ENCODE measurements at regions of chr16 and their contacts with region 1.

Region 1: DNA sequence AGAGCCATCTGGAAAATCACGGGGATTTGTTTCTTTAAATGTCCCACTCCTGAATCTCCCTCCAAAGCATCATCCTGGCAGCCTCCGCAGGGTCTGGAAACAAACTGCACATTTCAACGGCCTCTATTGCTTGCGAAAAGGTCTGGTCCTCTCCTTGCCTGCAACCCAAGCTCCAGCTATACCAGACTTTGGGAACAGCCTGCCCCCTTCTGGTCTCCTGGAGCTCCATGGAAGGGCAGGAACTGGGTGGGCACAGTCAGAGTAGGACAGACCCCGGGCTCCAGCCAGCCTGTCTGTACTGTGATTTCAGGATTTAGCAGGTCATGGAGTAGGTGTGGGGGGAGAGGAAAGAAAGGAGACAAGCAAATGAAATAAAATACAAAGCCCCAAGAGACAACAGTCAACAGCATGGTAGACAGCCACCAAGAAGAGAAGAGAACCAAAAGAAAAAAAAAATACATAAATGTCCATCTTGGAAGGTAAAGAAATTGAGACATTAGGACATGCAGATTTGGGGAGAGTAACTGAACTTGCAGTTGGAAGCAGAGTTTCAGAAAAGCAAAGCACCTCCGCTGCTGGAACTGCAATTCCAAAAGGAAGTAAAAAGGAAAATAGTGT is 2.7 kb downstream of the XYLT1 start:
- DNase-seq: peak; percentile 33
- ATAC-seq: peak; percentile 78
- H3K4me3 ChIP-seq: no peak overlapping the region
- H3K27ac ChIP-seq: no peak overlapping the region
- H3K4me1 ChIP-seq: no peaks in the 10 kb centered on the region
- H3K27me3 ChIP-seq: peaks cover 21 to 69% of the 10 kb centered on the region in 2 experiments
- CTCF ChIP-seq: peak; percentile 73
- EP300 ChIP-seq: no peak
- POLR2A ChIP-seq: no peak
- RAD21 ChIP-seq: no peak

Region 2: DNA sequence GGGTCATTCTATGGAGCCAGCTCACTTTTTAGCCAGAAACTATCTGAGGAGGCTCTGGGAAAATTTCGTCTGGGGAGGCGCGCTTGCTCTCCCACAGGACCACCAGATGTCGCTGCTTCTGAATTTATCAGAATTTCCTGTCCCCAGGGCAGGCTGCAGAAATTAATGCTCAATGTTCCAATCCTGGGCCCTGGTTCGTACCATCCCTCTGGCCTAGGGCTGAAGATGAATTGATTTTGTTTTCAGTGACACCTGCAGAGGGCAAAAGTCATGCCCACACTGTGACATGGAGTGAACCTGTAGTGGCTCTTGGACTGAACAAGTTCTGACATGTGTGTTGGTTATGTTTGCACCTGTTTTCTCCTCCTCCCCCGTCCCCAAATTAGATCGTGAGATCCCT is 606.5 kb before region 1 on chr16:
- CTCF ChIA-PET with region 1: interaction called, 3 read pairs
- POLR2A ChIA-PET with region 1: no interaction called
- in situ Hi-C with region 1: loop called (anchors 25 kb)
- intact Hi-C with region 1: no loop called
- DNase-seq: peak; percentile 49
- ATAC-seq: peak; percentile 84
- H3K4me3 ChIP-seq: no peak overlapping the region
- H3K27ac ChIP-seq: no peak overlapping the region
- H3K4me1 ChIP-seq: no peaks in the 10 kb centered on the region
- H3K27me3 ChIP-seq: no peaks in the 10 kb centered on the region; a peak in 1 of 5 replicates
- CTCF ChIP-seq: peak; percentile 86
- EP300 ChIP-seq: no peak
- POLR2A ChIP-seq: no peak
- RAD21 ChIP-seq: peak; percentile 84

Region 3: GRCh38 chr16:17277977-17278381 is 190.1 kb before region 1 on chr16:
- CTCF ChIA-PET with region 1: no interaction called
- POLR2A ChIA-PET with region 1: no interaction called
- in situ Hi-C with region 1: loop called (anchors 10 kb)
- intact Hi-C with region 1: no loop called
- DNase-seq: peak; percentile 38
- ATAC-seq: peak; percentile 81
- H3K4me3 ChIP-seq: no peak overlapping the region
- H3K27ac ChIP-seq: no peak overlapping the region
- H3K4me1 ChIP-seq: peaks cover 17% of the 10 kb centered on the region
- H3K27me3 ChIP-seq: peaks cover 0 to 4% of the 10 kb centered on the region in 2 experiments; a peak in 1 of 5 replicates
- CTCF ChIP-seq: peak; percentile 63
- EP300 ChIP-seq: no peak
- POLR2A ChIP-seq: no peak
- RAD21 ChIP-seq: peak; percentile 48; the same call in 1 of the 2 replicates

Region 4: GRCh38 chr16:17412221-17412620 is 55.8 kb before region 1 on chr16:
- CTCF ChIA-PET with region 1: no interaction called
- POLR2A ChIA-PET with region 1: no interaction called
- in situ Hi-C with region 1: no loop called
- intact Hi-C with region 1: no loop called
- DNase-seq: no peak
- ATAC-seq: no peak
- H3K4me3 ChIP-seq: no peak overlapping the region
- H3K27ac ChIP-seq: no peak overlapping the region
- H3K4me1 ChIP-seq: no peaks in the 10 kb centered on the region
- H3K27me3 ChIP-seq: peaks cover 2 to 20% of the 10 kb centered on the region in 2 experiments; a peak in 2 of 5 replicates
- CTCF ChIP-seq: no peak
- EP300 ChIP-seq: no peak
- POLR2A ChIP-seq: no peak
- RAD21 ChIP-seq: no peak

Region 5: GRCh38 chr16:17423221-17423620 is 44.8 kb before region 1 on chr16:
- CTCF ChIA-PET with region 1: no interaction called
- POLR2A ChIA-PET with region 1: no interaction called
- in situ Hi-C with region 1: no loop called
- intact Hi-C with region 1: no loop called
- DNase-seq: no peak
- ATAC-seq: no peak
- H3K4me3 ChIP-seq: no peak overlapping the region
- H3K27ac ChIP-seq: no peak overlapping the region
- H3K4me1 ChIP-seq: no peaks in the 10 kb centered on the region
- H3K27me3 ChIP-seq: peaks cover 0 to 1% of the 10 kb centered on the region in 2 experiments; a peak in 1 of 5 replicates
- CTCF ChIP-seq: no peak
- EP300 ChIP-seq: no peak
- POLR2A ChIP-seq: no peak
- RAD21 ChIP-seq: no peak

Region 6: DNA sequence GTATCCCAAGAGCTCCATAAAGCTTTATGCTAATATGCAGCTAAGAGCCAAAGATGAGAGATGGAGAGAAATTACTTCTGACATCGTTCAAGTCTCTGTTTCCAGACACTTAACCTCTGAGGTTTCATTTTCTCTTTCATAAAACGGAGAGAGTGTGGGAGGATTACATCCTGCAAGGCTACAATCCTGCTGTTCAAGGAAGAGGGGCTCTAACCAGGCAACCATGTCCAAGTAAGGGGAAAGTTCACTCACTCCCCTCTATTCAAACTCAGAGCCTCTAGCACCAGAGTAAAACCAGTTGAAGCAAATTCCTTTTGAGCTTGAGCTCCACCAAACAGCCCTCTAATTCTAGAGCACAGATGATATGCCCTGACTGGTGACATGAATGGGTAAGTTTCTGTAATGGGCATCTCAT is 471.1 kb after region 1 on chr16:
- CTCF ChIA-PET with region 1: no interaction called
- POLR2A ChIA-PET with region 1: no interaction called
- in situ Hi-C with region 1: no loop called
- intact Hi-C with region 1: no loop called
- DNase-seq: no peak
- ATAC-seq: no peak
- H3K4me3 ChIP-seq: no peak overlapping the region
- H3K27ac ChIP-seq: no peak overlapping the region
- H3K4me1 ChIP-seq: no peaks in the 10 kb centered on the region
- H3K27me3 ChIP-seq: no peaks in the 10 kb centered on the region
- CTCF ChIP-seq: no peak
- EP300 ChIP-seq: no peak
- POLR2A ChIP-seq: no peak
- RAD21 ChIP-seq: no peak